MCF 10A (cell line): ENCODE measurements at regions of chr9 and their contacts with region 1.

Region 1: DNA sequence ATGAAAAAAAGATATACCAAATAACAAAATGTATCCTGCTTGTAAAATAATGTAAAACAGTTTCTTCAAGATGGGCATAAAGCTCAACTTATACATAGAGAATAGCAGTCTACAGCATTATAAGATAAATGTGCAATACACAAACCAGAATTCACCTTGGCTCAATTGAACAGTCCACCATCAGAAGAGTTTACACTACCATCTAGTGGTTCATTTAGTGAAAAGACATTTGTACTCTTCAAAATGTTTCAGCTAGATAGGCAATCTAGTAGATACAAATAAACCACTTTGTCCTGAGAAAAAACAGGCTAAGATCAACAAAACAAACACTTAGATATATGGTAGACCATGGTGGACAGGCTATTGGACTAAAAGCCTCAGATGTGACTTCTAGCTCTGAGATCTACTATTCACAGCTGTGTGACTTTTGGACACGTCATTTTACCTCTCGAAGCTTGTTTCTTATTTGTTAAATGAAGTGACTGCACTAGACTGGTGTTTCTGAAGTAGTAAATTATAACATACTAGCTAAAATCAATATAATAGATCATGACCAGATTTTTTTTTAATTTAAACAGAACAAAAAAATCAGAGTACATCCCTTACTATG is 22.1 kb upstream of the TPD52L3 start:
- DNase-seq: peak; percentile 59
- H3K4me3 Mint-ChIP-seq: no peak overlapping the region
- H3K27ac Mint-ChIP-seq: no peak overlapping the region
- H3K4me1 Mint-ChIP-seq: no peaks in the 10 kb centered on the region
- H3K27me3 Mint-ChIP-seq: no peaks in the 10 kb centered on the region
- CTCF ChIP-seq: peak; percentile 61

Region 2: GRCh38 chr9:6049798-6050197 is 256.3 kb before region 1 on chr9:
- CTCF ChIA-PET with region 1: interaction called, 141 read pairs
- POLR2A ChIA-PET with region 1: interaction called, 12 read pairs
- intact Hi-C with region 1: no loop called
- DNase-seq: peak; percentile 56
- H3K4me3 Mint-ChIP-seq: no peak overlapping the region
- H3K27ac Mint-ChIP-seq: no peak overlapping the region
- H3K4me1 Mint-ChIP-seq: peaks cover 11% of the 10 kb centered on the region
- H3K27me3 Mint-ChIP-seq: no peaks in the 10 kb centered on the region
- CTCF ChIP-seq: peak; percentile 23

Region 3: GRCh38 chr9:6068983-6069382 is 237.1 kb before region 1 on chr9:
- CTCF ChIA-PET with region 1: interaction called, 27 read pairs
- POLR2A ChIA-PET with region 1: interaction called, 4 read pairs
- intact Hi-C with region 1: no loop called
- DNase-seq: no peak
- H3K4me3 Mint-ChIP-seq: no peak overlapping the region
- H3K27ac Mint-ChIP-seq: no peak overlapping the region
- H3K4me1 Mint-ChIP-seq: no peaks in the 10 kb centered on the region
- H3K27me3 Mint-ChIP-seq: no peaks in the 10 kb centered on the region
- CTCF ChIP-seq: no peak

Region 4: GRCh38 chr9:6123416-6123815 is 182.6 kb before region 1 on chr9:
- CTCF ChIA-PET with region 1: interaction called, 12 read pairs
- POLR2A ChIA-PET with region 1: no interaction called
- intact Hi-C with region 1: no loop called
- DNase-seq: no peak
- H3K4me3 Mint-ChIP-seq: no peak overlapping the region
- H3K27ac Mint-ChIP-seq: no peak overlapping the region
- H3K4me1 Mint-ChIP-seq: no peaks in the 10 kb centered on the region
- H3K27me3 Mint-ChIP-seq: no peaks in the 10 kb centered on the region
- CTCF ChIP-seq: no peak

Region 5: DNA sequence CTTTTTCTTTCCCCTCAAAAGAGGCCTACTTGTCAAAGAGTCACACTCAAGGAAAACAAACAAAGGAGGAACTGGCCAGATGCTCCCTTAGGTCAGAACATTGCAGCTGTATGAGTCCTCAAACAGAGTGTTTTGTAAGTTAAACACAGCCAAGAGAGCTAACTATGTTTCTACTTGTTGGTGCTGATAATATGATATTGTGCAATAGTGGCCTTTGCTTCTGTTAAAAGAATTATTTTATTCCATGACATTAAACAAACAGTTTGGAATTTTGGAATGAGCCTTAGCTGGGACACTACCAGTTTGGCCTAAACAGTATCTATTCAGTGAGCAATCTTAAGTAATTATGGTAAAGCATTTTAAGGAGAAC is 33.8 kb before region 1 on chr9:
- CTCF ChIA-PET with region 1: interaction called, 11 read pairs
- POLR2A ChIA-PET with region 1: interaction called, 4 read pairs
- intact Hi-C with region 1: no loop called
- DNase-seq: peak; percentile 73
- H3K4me3 Mint-ChIP-seq: no peak overlapping the region
- H3K27ac Mint-ChIP-seq: peak overlapping the region; percentile 62
- H3K4me1 Mint-ChIP-seq: peaks cover 4% of the 10 kb centered on the region
- H3K27me3 Mint-ChIP-seq: no peaks in the 10 kb centered on the region
- CTCF ChIP-seq: no peak